PC-9 (cell line): ENCODE measurements at regions of chr3 and their contacts with region 1.

Region 1: DNA sequence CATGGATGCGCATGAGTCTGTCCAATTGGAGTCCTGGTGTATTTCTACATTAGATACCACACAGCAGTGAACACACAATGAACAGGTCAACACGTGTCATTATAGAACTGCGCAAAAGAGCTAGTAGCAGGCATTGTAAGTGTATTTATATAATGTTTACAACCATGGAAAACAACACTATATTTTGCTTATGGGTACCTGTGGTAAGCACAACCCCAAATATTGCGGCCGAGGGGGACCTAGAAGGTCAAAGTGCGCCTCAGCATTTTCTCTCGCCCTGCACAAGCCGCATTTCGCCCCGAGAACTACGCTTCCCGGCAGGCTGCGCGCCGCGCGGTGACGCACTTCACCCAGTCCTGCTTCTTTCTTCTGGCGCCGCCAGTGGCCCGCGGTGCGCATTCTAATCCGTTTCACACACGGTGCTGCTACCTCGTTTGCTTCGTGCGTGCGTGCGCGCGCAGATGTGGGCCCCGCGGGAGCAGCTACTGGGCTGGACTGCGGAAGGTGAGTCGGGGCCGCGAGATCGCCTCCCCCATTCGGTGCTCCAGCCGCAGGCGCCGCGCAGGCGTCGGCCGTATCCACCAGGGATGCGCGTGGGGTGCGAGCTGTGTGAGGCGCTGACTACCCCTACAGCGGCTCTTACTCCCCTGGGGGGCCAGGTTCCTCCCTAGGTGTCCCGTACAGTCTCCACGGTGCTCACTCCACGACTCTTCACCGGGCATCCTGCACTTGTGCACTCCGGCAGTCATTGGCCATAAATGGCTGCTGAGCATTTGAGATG is at the start of gene ZNF589:
- DNase-seq: peak; percentile 89 to 94
- H3K4me3 ChIP-seq: peak within 1 kb of the TSS; percentile 77
- H3K27ac ChIP-seq: no peak within 1 kb of the TSS
- H3K4me1 ChIP-seq: 0 out of 2 replicates have a peak, but pooled peaks cover 8% of the 10 kb centered on the region
- H3K27me3 ChIP-seq: no peaks in the 10 kb centered on the region
- CTCF ChIP-seq: no peak; the same call in 1 of the 2 replicates
- total RNA-seq, gene ZNF589: 11.1 and 11.7 TPM in 2 replicates

Region 2: GRCh38 chr3:47594792-47595191 is 646.1 kb before region 1 on chr3:
- CTCF ChIA-PET with region 1: no interaction called
- POLR2A ChIA-PET with region 1: no interaction called
- intact Hi-C with region 1: no loop called
- DNase-seq: peak in 1 of 2 experiments; percentile 59
- H3K4me3 ChIP-seq: no peak overlapping the region
- H3K27ac ChIP-seq: no peak overlapping the region
- H3K4me1 ChIP-seq: no peaks in the 10 kb centered on the region
- H3K27me3 ChIP-seq: no peaks in the 10 kb centered on the region
- CTCF ChIP-seq: no peak

Region 3: DNA sequence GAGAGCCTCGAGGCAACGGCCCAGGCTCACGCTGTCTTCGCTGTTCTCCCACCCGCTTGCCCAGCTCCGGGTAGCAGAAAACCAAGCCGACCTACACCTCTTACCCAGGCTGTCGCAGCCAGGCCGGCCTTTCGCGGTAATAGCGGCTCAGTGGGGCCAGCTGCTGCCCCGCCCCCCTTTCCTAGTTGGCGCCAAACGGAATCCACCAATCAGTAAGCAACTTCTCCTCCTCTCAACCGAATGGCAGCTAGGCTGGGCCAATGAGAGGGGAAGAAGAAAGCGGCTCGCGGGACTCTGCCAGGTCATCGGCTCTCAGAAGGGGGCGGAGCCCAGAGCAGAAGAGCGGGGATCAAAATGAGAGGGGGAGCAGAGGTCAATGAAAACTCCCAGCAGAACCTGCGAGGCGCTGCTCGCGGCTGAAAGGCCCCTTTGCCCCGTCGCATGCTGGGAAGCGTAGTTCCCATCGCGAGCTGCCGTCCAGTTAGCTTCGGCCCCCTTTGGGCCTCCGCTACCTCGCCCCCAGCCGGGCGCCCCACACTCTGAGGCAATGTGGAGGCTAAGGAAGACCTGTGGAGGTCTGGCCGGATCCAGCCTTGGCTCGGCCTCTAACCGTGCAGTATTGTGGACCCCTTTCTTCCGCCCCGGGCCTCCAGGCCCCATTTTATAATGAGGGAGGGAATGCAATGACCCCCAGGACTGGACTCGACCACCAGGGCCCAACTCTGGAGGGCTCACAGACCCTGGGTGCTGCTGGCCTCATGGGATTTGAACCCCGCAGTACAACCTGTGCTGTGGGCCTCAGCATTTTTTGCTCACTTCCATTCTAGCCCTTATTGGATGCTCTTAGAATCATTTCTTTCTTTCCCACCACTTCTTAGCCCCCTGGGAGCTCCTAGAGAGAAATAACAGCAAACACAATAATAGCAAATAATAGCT is 52.4 kb before region 1 on chr3 and contains the start of gene CDC25A:
- CTCF ChIA-PET with region 1: no interaction called
- POLR2A ChIA-PET with region 1: no interaction called
- intact Hi-C with region 1: loop called (anchors 2 kb)
- DNase-seq: peak; percentile 96
- H3K4me3 ChIP-seq: peak within 1 kb of the TSS; percentile 87
- H3K27ac ChIP-seq: no peak within 1 kb of the TSS
- H3K4me1 ChIP-seq: peaks cover 10% of the 10 kb centered on the region; the same call in 1 of the 2 replicates
- H3K27me3 ChIP-seq: no peaks in the 10 kb centered on the region
- CTCF ChIP-seq: no peak
- total RNA-seq, gene CDC25A: 9.7 and 10.5 TPM in 2 replicates

Region 4: GRCh38 chr3:48199956-48200355 is 40.9 kb before region 1 on chr3:
- CTCF ChIA-PET with region 1: interaction called, 3 read pairs
- POLR2A ChIA-PET with region 1: interaction called, 12 read pairs
- intact Hi-C with region 1: no loop called
- DNase-seq: no peak
- H3K4me3 ChIP-seq: no peak overlapping the region
- H3K27ac ChIP-seq: no peak overlapping the region
- H3K4me1 ChIP-seq: no peaks in the 10 kb centered on the region
- H3K27me3 ChIP-seq: no peaks in the 10 kb centered on the region
- CTCF ChIP-seq: no peak